GM10248 (cell line): ENCODE measurements at regions of chr6 and their contacts with region 1.

Region 1: GRCh38 chr6:95841560-95841959 is 174.2 kb upstream of the FUT9 start:
- DNase-seq: no peak
- CTCF ChIP-seq: no peak

Region 2: DNA sequence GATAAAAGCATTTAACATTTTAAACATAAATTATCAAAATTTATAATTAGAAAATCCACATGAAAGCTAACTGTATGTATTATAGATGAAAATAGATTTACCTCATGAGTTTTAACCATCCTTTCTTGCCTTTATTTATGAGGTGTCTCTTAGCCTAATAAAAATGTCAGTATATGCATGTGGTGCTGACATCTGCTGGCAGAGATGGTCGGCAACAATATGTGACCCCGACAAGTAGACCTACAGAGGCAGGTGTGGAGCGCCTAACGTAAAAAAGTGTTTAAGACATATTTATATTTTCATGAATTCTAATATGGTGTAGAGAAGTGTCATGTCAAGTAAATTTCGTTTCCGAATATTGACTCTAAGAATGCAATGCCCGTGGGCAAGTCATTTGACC is 25.2 kb after region 1 on chr6:
- CTCF ChIA-PET with region 1: interaction called, 12 read pairs
- POLR2A ChIA-PET with region 1: no interaction called
- DNase-seq: no peak
- CTCF ChIP-seq: peak; percentile 44

Region 3: DNA sequence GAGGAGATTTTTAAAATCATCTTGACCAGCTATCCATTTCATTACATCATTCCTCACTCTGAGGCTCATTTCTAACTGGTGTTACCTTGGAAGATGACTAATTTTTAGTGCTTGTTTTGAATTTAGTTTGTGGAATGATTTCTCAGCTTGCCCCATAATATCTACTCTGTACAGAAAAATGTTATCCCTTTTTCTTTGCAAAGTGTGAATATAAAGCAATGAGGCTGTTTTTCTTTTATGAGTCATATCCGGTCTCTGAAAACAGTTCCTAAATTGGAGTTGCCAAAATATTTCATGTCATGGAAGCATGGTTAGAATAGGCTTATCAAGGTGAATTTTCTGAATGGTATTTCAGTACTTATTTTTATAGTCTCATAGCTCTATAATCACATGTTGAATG is 218.0 kb after region 1 on chr6:
- CTCF ChIA-PET with region 1: no interaction called
- POLR2A ChIA-PET with region 1: no interaction called
- DNase-seq: no peak
- CTCF ChIP-seq: no peak